Ovary (tissue), 10 donors: ENCODE measurements at regions of chr2 and their contacts with region 1.

Region 1: DNA sequence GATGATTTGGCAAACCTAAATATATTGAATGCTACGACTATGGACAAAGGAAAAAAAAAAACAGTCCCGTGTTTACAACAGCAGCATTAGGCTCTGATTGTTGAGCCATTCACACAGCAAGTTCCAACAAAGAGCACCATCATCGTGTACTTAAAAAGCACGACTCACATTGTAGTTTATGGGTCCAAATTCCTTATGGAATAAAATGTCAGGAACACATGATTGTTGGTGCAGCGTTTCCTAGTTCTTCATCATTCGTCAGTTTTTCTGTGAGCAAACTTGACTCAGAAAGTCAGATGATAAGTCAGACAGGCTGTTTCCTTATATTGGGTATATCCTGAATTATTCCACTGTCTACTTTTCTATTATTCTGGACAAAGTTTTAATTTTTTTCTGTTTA is 10.0 kb upstream of the KIDINS220 start:
- DNase-seq: no peak
- H3K4me3 ChIP-seq: no peak overlapping the region
- H3K27ac ChIP-seq: no peak overlapping the region
- H3K4me1 ChIP-seq: no peaks in the 10 kb centered on the region
- H3K27me3 ChIP-seq: no peaks in the 10 kb centered on the region
- CTCF ChIP-seq: no peak
- EP300 ChIP-seq: no peak
- POLR2A ChIP-seq: no peak

Region 2: GRCh38 chr2:8796878-8797550 is 50.4 kb before region 1 on chr2:
- intact Hi-C with region 1: no loop called
- DNase-seq: no peak
- H3K4me3 ChIP-seq: no peak overlapping the region
- H3K27ac ChIP-seq: no peak overlapping the region
- H3K4me1 ChIP-seq: peaks cover 4% of the 10 kb centered on the region
- H3K27me3 ChIP-seq: no peaks in the 10 kb centered on the region
- CTCF ChIP-seq: no peak
- EP300 ChIP-seq: no peak
- POLR2A ChIP-seq: no peak

Region 3: DNA sequence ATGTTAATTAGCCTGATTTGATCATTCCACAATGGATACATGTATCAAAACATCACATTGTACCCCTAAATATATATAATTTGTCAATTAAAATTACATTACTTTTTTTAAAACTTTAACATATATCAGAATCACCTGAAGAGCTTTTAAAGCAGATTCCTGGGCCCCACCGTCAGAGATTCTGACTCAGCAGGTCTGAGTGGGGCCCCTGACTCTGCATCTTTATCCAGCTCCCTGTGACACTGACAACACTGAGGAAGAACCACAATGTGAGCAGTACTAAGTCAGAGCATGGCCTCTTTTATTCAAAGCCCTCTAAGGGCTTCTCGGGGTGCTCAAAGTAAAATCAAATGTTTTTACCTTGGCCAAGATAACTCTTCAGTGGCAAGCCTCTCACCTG is 19.7 kb before region 1 on chr2:
- intact Hi-C with region 1: loop called in 1 of 4 experiments (anchors 1 kb)
- DNase-seq: no peak
- H3K4me3 ChIP-seq: no peak overlapping the region
- H3K27ac ChIP-seq: no peak overlapping the region
- H3K4me1 ChIP-seq: peaks cover 13% of the 10 kb centered on the region
- H3K27me3 ChIP-seq: no peaks in the 10 kb centered on the region
- CTCF ChIP-seq: no peak
- EP300 ChIP-seq: no peak
- POLR2A ChIP-seq: no peak